ENCODE measurements at regions of chr7 and their contacts with region 1.

Region 1: DNA sequence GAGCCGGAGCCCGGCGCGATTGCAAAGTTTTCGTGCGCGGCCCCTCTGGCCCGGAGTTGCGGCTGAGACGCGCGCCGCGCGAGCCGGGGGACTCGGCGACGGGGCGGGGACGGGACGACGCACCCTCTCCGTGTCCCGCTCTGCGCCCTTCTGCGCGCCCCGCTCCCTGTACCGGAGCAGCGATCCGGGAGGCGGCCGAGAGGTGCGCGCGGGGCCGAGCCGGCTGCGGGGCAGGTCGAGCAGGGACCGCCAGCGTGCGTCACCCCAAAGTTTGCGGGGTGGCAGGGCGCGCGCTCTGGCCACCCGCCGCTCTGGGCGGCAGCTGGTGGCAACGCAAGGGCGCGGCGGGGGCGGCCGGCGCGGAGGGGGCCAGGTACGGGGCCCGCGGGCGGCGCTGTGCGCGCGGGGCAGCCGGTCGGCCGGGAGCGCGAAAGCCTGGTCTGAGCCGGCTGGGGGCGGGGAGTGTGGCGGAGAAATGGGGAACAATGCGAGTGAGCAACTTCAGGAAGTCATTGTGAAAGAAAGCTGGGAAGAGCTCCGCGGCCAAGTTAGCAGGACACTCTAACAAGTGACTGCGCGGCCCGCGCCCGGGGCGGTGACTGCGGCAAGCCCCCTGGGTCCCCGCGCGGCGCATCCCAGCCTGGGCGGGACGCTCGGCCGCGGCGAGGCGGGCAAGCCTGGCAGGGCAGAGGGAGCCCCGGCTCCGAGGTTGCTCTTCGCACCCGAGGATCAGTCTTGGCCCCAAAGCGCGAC is at the start of gene IKZF1:
- DNase-seq: peak; percentile 38 to 75 (median 58)
- ATAC-seq: peak; percentile 54
- H3K4me3 ChIP-seq: peak within 1 kb of the TSS; percentile 84
- H3K4me3 Mint-ChIP-seq: peak within 1 kb of the TSS; percentile 93 to 100 (median 99)
- H3K27ac ChIP-seq: peak within 1 kb of the TSS; percentile 90
- H3K27ac Mint-ChIP-seq: peak within 1 kb of the TSS; percentile 91 to 100 (median 98)
- H3K4me1 ChIP-seq: peaks cover 13 to 33% of the 10 kb centered on the region in 2 donors
- H3K4me1 Mint-ChIP-seq: peaks cover 37 to 57% (median 53%) of the 10 kb centered on the region in 7 donors
- H3K27me3 ChIP-seq: no peaks in the 10 kb centered on the region
- H3K27me3 Mint-ChIP-seq: peaks cover 0 to 2% (median 0%) of the 10 kb centered on the region in 5 donors
- total RNA-seq, gene IKZF1: 388 to 548 (median 463) TPM

Region 2: GRCh38 chr7:50142425-50143017 is 161.8 kb before region 1 on chr7:
- CTCF ChIA-PET with region 1: interaction called, 4 read pairs
- POLR2A ChIA-PET with region 1: interaction called, 3 read pairs
- intact Hi-C with region 1: loop called in 1 of 2 experiments (anchors 2 kb)
- DNase-seq: peak in 7 of 9 donors; percentile 43 to 72 (median 62)
- ATAC-seq: peak; percentile 83
- H3K4me3 ChIP-seq: no peak overlapping the region
- H3K4me3 Mint-ChIP-seq: peak overlapping the region in 9 of 10 donors; percentile 13 to 86 (median 64)
- H3K27ac ChIP-seq: peak overlapping the region; percentile 55
- H3K27ac Mint-ChIP-seq: peak overlapping the region in 8 of 9 donors; percentile 16 to 91 (median 62)
- H3K4me1 ChIP-seq: peaks cover 3% of the 10 kb centered on the region in 2 donors
- H3K4me1 Mint-ChIP-seq: peaks cover 0 to 37% (median 12%) of the 10 kb centered on the region in 7 donors
- H3K27me3 ChIP-seq: no peaks in the 10 kb centered on the region
- H3K27me3 Mint-ChIP-seq: peaks cover 0 to 18% (median 0%) of the 10 kb centered on the region in 5 donors

Region 3: GRCh38 chr7:50182759-50183158 is 121.6 kb before region 1 on chr7:
- CTCF ChIA-PET with region 1: no interaction called
- POLR2A ChIA-PET with region 1: no interaction called
- intact Hi-C with region 1: no loop called
- DNase-seq: no peak
- ATAC-seq: no peak
- H3K4me3 ChIP-seq: no peak overlapping the region
- H3K4me3 Mint-ChIP-seq: no peak overlapping the region
- H3K27ac ChIP-seq: no peak overlapping the region
- H3K27ac Mint-ChIP-seq: peak overlapping the region in 1 of 9 donors; percentile 3
- H3K4me1 ChIP-seq: no peaks in the 10 kb centered on the region
- H3K4me1 Mint-ChIP-seq: peaks cover 0 to 4% (median 0%) of the 10 kb centered on the region in 7 donors
- H3K27me3 ChIP-seq: no peaks in the 10 kb centered on the region
- H3K27me3 Mint-ChIP-seq: peaks cover 0 to 16% (median 0%) of the 10 kb centered on the region in 5 donors

Region 4: DNA sequence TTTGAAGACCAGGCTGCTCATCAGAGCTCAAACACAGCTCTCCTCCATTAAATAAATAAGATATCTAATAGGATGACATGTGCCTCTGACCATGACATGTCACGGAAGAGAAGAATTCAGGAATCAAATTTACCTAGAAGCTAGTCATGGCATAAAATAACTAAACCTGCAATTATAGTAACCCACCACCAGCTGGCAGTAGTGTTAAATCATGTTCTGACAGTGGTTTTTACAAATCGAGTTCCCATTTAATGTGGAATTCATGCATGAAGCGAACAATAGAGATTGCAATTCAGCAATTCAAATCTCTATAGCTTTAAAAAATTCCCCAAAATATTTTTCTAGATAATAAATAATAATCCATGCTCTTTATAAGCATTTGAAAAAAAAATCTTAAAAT is 74.4 kb before region 1 on chr7:
- CTCF ChIA-PET with region 1: interaction called, 3 read pairs
- POLR2A ChIA-PET with region 1: interaction called, 10 read pairs
- intact Hi-C with region 1: loop called in 1 of 2 experiments (anchors 2 kb)
- DNase-seq: no peak
- ATAC-seq: no peak
- H3K4me3 ChIP-seq: no peak overlapping the region
- H3K4me3 Mint-ChIP-seq: no peak overlapping the region
- H3K27ac ChIP-seq: no peak overlapping the region
- H3K27ac Mint-ChIP-seq: peak overlapping the region in 1 of 9 donors; percentile 81
- H3K4me1 ChIP-seq: peaks cover 15 to 20% of the 10 kb centered on the region in 2 donors
- H3K4me1 Mint-ChIP-seq: peaks cover 31 to 44% (median 39%) of the 10 kb centered on the region in 7 donors
- H3K27me3 ChIP-seq: no peaks in the 10 kb centered on the region
- H3K27me3 Mint-ChIP-seq: no peaks in the 10 kb centered on the region

Region 5: DNA sequence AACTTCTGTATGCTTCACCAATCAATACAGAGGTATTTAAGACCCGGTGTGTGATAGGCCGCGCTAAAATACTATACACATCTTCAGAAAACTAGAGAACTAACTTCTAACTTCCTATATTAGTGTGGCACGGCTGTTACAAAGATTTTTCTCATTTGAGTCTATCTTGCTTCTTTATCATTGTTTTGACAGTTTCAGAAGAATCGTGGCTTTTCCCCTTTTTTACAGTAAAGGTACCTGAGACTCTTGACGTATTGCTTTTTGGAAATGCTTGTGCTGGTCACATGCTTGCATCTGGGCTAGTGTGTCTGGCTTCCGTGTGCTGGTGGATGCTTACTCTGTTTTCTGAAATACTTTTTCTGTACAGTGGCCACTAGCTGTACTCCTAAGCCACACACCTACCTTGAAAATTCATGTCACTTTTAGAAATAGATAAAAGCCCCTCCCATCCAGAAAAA is 12.9 kb after region 1 on chr7:
- CTCF ChIA-PET with region 1: interaction called, 15 read pairs
- POLR2A ChIA-PET with region 1: interaction called, 674 read pairs
- intact Hi-C with region 1: loop called (anchors 1 kb)
- DNase-seq: peak in 7 of 9 donors; percentile 71 to 92 (median 89)
- ATAC-seq: peak; percentile 85
- H3K4me3 ChIP-seq: peak overlapping the region; percentile 73
- H3K4me3 Mint-ChIP-seq: peak overlapping the region; percentile 81 to 100 (median 94)
- H3K27ac ChIP-seq: peak overlapping the region; percentile 90
- H3K27ac Mint-ChIP-seq: peak overlapping the region in 6 of 9 donors; percentile 90 to 100 (median 99)
- H3K4me1 ChIP-seq: peaks cover 78 to 92% of the 10 kb centered on the region in 2 donors
- H3K4me1 Mint-ChIP-seq: peaks cover 0 to 100% (median 95%) of the 10 kb centered on the region in 7 donors
- H3K27me3 ChIP-seq: no peaks in the 10 kb centered on the region
- H3K27me3 Mint-ChIP-seq: no peaks in the 10 kb centered on the region

Region 6: GRCh38 chr7:50349963-50350944 is 45.9 kb after region 1 on chr7:
- CTCF ChIA-PET with region 1: interaction called, 20 read pairs
- POLR2A ChIA-PET with region 1: interaction called, 2,368 read pairs
- intact Hi-C with region 1: loop called in 1 of 2 experiments (anchors 1 kb)
- DNase-seq: peak in 5 of 9 donors; percentile 55 to 77 (median 68)
- ATAC-seq: peak; percentile 51
- H3K4me3 ChIP-seq: peak overlapping the region; percentile 4
- H3K4me3 Mint-ChIP-seq: peak overlapping the region; percentile 71 to 95 (median 78)
- H3K27ac ChIP-seq: peak overlapping the region; percentile 93
- H3K27ac Mint-ChIP-seq: peak overlapping the region in 6 of 9 donors; percentile 91 to 100 (median 100)
- H3K4me1 ChIP-seq: peaks cover 96% of the 10 kb centered on the region in 2 donors
- H3K4me1 Mint-ChIP-seq: peaks cover 0 to 100% (median 97%) of the 10 kb centered on the region in 7 donors
- H3K27me3 ChIP-seq: no peaks in the 10 kb centered on the region
- H3K27me3 Mint-ChIP-seq: no peaks in the 10 kb centered on the region

Region 7: GRCh38 chr7:50418086-50418515 is 113.8 kb after region 1 on chr7:
- CTCF ChIA-PET with region 1: interaction called, 3 read pairs
- POLR2A ChIA-PET with region 1: interaction called, 3 read pairs
- intact Hi-C with region 1: loop called in 1 of 2 experiments (anchors 1 kb)
- DNase-seq: peak; percentile 31 to 68 (median 56)
- ATAC-seq: peak; percentile 91
- H3K4me3 ChIP-seq: no peak overlapping the region
- H3K4me3 Mint-ChIP-seq: no peak overlapping the region
- H3K27ac ChIP-seq: no peak overlapping the region
- H3K27ac Mint-ChIP-seq: peak overlapping the region in 1 of 9 donors; percentile 26
- H3K4me1 ChIP-seq: peaks cover 0 to 22% of the 10 kb centered on the region in 2 donors
- H3K4me1 Mint-ChIP-seq: peaks cover 5 to 35% (median 29%) of the 10 kb centered on the region in 7 donors
- H3K27me3 ChIP-seq: no peaks in the 10 kb centered on the region
- H3K27me3 Mint-ChIP-seq: no peaks in the 10 kb centered on the region

Measured in naive thymus-derived CD4-positive, alpha-beta T cell (primary cell).